T-cell (primary cell): ENCODE measurements at regions of chr2 and their contacts with region 1.

Region 1: GRCh38 chr2:64523666-64524603 is at the start of gene AFTPH:
- DNase-seq: peak; percentile 97 to 100 (median 100)
- ATAC-seq: peak; percentile 92 to 97 (median 94)
- H3K4me3 ChIP-seq: peak within 1 kb of the TSS; percentile 78 to 98
- H3K4me3 Mint-ChIP-seq: peak within 1 kb of the TSS; percentile 99 to 100 (median 99)
- H3K27ac ChIP-seq: peak within 1 kb of the TSS; percentile 93
- H3K27ac Mint-ChIP-seq: peak within 1 kb of the TSS; percentile 97 to 99
- H3K4me1 ChIP-seq: peaks cover 9 to 25% of the 10 kb centered on the region in 2 experiments
- H3K4me1 Mint-ChIP-seq: peaks cover 42 to 49% (median 44%) of the 10 kb centered on the region in 3 donors
- H3K27me3 ChIP-seq: peaks cover 0 to 3% of the 10 kb centered on the region in 2 experiments
- H3K27me3 Mint-ChIP-seq: no peaks in the 10 kb centered on the region
- total RNA-seq, gene AFTPH: 33.4 to 42.5 (median 37.9) TPM

Region 2: GRCh38 chr2:64504774-64505720 is 18.9 kb before region 1 on chr2:
- CTCF ChIA-PET with region 1: no interaction called
- POLR2A ChIA-PET with region 1: interaction called in 1 of 2 experiments, 10 read pairs
- DNase-seq: no peak
- ATAC-seq: no peak
- H3K4me3 ChIP-seq: no peak overlapping the region
- H3K4me3 Mint-ChIP-seq: no peak overlapping the region
- H3K27ac ChIP-seq: no peak overlapping the region
- H3K27ac Mint-ChIP-seq: no peak overlapping the region
- H3K4me1 ChIP-seq: no peaks in the 10 kb centered on the region
- H3K4me1 Mint-ChIP-seq: no peaks in the 10 kb centered on the region
- H3K27me3 ChIP-seq: peaks cover 0 to 6% of the 10 kb centered on the region in 2 experiments
- H3K27me3 Mint-ChIP-seq: peaks cover 4 to 8% of the 10 kb centered on the region in 2 donors

Region 3: GRCh38 chr2:64586883-64587481 is 63.0 kb after region 1 on chr2:
- CTCF ChIA-PET with region 1: interaction called in 1 of 2 experiments, 18 read pairs
- POLR2A ChIA-PET with region 1: no interaction called
- DNase-seq: peak in 1 of 35 experiments; percentile 67
- ATAC-seq: peak in 2 of 4 experiments; percentile 48 to 50
- H3K4me3 ChIP-seq: no peak overlapping the region
- H3K4me3 Mint-ChIP-seq: no peak overlapping the region
- H3K27ac ChIP-seq: no peak overlapping the region
- H3K27ac Mint-ChIP-seq: peak overlapping the region in 1 of 2 donors; percentile 30
- H3K4me1 ChIP-seq: no peaks in the 10 kb centered on the region
- H3K4me1 Mint-ChIP-seq: peaks cover 0 to 3% (median 0%) of the 10 kb centered on the region in 3 donors
- H3K27me3 ChIP-seq: no peaks in the 10 kb centered on the region
- H3K27me3 Mint-ChIP-seq: no peaks in the 10 kb centered on the region

Region 4: DNA sequence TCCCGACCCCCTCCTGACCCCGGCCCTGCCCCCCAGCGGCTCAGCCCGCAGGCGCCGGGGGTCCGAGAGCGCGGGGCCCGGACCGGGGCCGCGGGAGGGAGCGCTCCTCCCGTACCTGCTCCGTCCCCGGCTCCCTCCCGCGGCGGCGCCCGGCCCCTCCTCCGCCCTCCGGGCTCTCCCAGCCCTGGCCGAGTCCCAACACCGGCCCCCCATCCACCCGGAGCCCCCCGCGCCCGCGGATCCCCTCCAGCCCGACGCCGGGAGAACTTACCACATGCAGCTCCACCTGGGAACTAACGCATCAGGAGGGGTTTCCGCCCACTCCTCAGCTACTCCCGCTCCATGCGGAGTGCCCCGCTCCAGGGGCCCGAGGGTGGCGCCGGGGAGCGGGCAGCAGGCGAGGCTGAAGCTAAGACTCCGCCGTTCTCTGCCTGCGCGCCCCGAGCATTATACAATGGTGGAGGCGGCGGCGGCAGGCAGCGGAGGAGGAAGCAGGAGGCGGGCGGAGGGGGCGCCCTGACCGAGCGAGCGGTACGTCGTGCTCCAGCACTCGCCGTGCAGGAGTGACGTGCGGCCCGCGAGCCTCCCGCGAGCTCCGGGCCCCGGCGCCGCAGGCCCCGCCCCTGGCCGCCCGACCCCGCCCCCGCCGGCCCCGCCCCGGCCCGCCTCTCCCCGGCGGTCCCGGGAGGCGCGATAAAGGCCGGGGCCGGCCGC is 129.6 kb after region 1 on chr2 and contains the start of gene SERTAD2:
- CTCF ChIA-PET with region 1: interaction called in 1 of 2 experiments, 17 read pairs
- POLR2A ChIA-PET with region 1: interaction called in 1 of 2 experiments, 9 read pairs
- DNase-seq: peak; percentile 71 to 93 (median 85)
- ATAC-seq: peak; percentile 89 to 91 (median 90)
- H3K4me3 ChIP-seq: peak within 1 kb of the TSS; percentile 94 to 96
- H3K4me3 Mint-ChIP-seq: peak within 1 kb of the TSS; percentile 88 to 91 (median 89)
- H3K27ac ChIP-seq: peak within 1 kb of the TSS; percentile 86
- H3K27ac Mint-ChIP-seq: peak within 1 kb of the TSS; percentile 91 to 92
- H3K4me1 ChIP-seq: peaks cover 25 to 56% of the 10 kb centered on the region in 2 experiments
- H3K4me1 Mint-ChIP-seq: peaks cover 75 to 81% (median 76%) of the 10 kb centered on the region in 3 donors
- H3K27me3 ChIP-seq: no peaks in the 10 kb centered on the region
- H3K27me3 Mint-ChIP-seq: no peaks in the 10 kb centered on the region
- total RNA-seq, gene SERTAD2: 22.8 to 39.7 (median 27.4) TPM